ENCODE measurements at regions of chr2 and their contacts with region 1.

Region 1: GRCh38 chr2:230614913-230615332 is 97.7 kb upstream of the CAB39 start:
- DNase-seq: no peak
- H3K4me3 Mint-ChIP-seq: peak overlapping the region; percentile 5
- H3K27ac Mint-ChIP-seq: peak overlapping the region; percentile 57
- H3K4me1 Mint-ChIP-seq: peaks cover 40% of the 10 kb centered on the region
- H3K27me3 Mint-ChIP-seq: no peaks in the 10 kb centered on the region

Region 2: DNA sequence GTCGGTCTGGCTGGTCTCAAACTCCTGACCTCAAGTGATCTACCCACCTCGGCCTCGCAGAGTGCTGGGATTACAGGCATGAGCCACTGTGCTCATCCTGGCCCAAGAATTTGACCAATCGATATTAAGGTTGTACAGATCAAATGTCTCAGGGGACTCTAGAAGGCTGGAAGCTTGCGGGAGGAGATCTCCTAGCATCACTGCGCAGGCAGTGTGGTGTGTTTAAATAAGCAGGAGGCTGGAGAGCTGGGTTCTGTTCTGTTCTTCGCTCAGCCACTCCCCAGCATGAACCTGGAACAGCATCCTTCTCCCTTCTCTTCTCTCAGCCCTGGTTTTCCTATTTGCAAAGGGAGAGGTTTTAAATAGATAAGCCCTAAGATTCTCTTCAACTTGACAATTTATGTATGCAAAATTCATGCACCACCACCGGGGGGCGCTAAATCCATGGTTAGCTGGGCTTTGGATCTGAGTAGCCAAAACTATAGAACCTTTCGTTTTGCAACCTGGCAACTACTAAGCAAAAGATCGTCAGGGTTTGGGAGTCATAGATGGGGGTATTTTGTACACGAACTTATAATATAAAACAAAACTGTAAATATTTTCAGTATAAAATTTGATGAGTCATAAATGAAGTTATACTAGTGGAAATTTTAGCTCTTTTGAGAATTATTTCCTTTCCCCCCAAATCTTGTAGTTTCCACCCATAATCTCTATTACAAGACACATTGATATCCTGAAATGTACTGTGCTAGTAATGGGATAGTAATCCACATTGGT is 606.8 kb before region 1 on chr2:
- intact Hi-C with region 1: loop called (anchors 1 kb)
- DNase-seq: peak; percentile 68
- H3K4me3 Mint-ChIP-seq: no peak overlapping the region
- H3K27ac Mint-ChIP-seq: no peak overlapping the region
- H3K4me1 Mint-ChIP-seq: peaks cover 10% of the 10 kb centered on the region
- H3K27me3 Mint-ChIP-seq: no peaks in the 10 kb centered on the region

Region 3: DNA sequence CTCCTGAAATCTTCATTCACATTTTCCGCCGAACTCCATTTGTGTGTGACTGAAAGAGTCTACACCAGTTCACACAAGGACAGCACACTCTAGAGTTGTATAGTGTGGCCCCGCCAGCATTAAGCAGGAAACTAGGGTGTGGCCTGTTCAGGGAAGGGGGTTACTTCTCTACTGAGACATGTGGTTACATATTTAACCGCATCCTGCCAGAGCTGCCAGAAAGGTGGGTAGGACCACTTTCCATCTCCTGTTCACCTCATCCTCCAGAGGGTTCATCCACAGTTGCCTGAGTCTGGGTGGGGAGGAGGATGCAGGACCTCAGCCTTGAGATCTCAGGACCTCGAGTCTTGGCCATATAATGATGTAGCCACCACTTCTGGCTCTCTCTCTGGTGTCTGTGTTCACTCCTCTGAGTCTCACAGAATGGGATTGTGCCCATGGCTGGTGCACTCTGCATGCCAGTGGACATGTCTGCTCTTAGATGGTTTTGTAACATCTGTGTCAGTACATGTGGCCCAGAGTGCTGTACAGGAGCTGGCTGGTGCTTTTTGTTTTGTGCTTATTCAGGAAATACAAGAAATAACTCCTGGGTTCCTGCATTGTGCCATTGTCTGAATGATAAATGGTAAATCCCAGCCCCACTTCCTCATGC is 295.6 kb before region 1 on chr2:
- intact Hi-C with region 1: loop called (anchors 2 kb)
- DNase-seq: peak; percentile 79
- H3K4me3 Mint-ChIP-seq: peak overlapping the region; percentile 61
- H3K27ac Mint-ChIP-seq: peak overlapping the region; percentile 94
- H3K4me1 Mint-ChIP-seq: peaks cover 60% of the 10 kb centered on the region
- H3K27me3 Mint-ChIP-seq: no peaks in the 10 kb centered on the region

Region 4: GRCh38 chr2:230447455-230448451 is 167.2 kb before region 1 on chr2:
- intact Hi-C with region 1: loop called (anchors 5 kb)
- DNase-seq: no peak
- H3K4me3 Mint-ChIP-seq: peak overlapping the region; percentile 20
- H3K27ac Mint-ChIP-seq: peak overlapping the region; percentile 80
- H3K4me1 Mint-ChIP-seq: peaks cover 58% of the 10 kb centered on the region
- H3K27me3 Mint-ChIP-seq: no peaks in the 10 kb centered on the region

Region 5: DNA sequence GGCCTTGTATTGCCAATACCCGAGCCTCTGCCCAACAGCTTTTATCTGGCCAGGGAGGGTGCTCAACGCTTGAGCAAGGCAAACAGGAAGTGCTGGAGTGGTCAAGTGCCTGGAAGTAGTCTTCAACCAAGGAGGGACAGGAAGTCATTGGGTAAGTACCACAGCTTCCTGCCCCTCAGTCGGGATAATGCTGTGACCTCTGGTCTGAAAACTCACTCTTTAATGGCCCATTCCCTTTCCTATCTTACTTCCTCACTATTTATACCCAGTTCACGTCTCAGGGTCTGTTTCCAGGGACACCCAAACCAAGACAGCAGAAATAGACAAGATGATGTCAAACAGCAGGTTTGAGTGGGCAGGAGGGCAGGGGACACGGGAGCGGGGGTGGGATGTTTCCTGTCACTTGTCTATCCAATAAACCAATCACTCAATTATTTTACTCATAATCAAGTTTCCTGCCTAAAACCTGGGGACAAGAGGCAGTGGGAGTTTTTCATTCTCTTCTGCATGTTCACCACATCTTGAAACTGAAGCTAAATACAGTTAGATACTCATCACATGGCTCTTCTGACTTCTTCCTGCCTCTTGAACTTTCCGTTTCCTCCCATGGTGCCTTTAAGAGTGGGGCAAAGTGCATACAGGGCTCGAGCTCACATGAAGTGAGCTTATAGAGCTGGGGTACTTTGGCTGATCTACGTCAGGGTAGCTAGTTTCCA is 28.8 kb after region 1 on chr2:
- intact Hi-C with region 1: loop called (anchors 1 kb)
- DNase-seq: peak; percentile 51
- H3K4me3 Mint-ChIP-seq: peak overlapping the region; percentile 40
- H3K27ac Mint-ChIP-seq: peak overlapping the region; percentile 98
- H3K4me1 Mint-ChIP-seq: peaks cover 24% of the 10 kb centered on the region
- H3K27me3 Mint-ChIP-seq: no peaks in the 10 kb centered on the region

Region 6: DNA sequence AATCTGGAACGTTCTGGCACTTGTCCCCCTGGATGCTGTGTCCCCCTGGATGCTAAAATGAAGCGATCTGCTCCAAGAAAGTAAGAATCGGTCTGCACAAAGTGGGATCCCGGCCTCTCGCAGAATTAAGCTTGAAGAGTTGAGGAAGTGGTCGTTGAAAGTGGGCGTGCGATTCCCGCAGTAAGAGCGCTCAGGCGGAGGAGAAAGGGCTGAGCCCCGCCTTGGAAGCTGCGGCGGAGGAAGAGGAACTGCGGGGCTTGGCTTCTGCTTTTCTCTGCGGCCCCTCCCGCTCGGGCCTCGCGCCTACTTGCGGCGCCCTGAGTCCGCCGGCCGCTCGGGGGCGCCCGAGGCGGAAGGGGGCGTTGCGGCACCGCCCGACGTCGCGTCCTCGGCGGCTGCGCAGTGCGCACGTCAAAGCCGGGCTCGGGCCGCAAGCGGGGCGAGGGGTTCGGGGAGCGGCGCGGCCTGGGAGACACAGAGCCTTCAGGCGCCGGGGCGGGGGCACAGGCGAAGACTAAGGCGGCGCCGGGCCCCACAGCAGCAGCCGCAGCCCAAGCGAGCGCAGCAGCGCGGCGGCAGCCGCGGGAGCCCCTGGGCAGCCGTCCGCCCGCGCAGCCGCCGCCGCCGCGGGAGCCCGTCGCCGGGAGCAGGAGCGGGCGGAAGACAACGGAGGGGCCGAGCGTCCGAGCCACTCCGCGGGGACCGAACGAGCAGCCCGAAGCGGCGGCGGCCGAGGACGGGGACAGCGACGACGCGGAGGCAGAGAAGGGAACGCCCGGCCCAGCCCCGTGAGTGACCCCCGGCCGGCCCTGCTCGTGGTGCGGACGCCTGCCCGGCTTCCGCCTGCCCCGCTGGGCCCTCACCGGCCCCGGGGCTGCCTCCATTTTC is 97.8 kb after region 1 on chr2 and contains the start of gene CAB39:
- intact Hi-C with region 1: loop called (anchors 5 kb)
- DNase-seq: peak; percentile 87
- H3K4me3 Mint-ChIP-seq: peak within 1 kb of the TSS; percentile 99
- H3K27ac Mint-ChIP-seq: peak within 1 kb of the TSS; percentile 93
- H3K4me1 Mint-ChIP-seq: peaks cover 34% of the 10 kb centered on the region
- H3K27me3 Mint-ChIP-seq: no peaks in the 10 kb centered on the region
- total RNA-seq, gene CAB39: 173 and 176 TPM in 2 replicates

Measured in activated T-helper 2 cell treated with anti-CD3 and anti-CD28 coated beads, Interferon-gamma antibody, Interleukin-2, Interleukin-4, amounts not matched to agents 10 μg/mL and 5 μg/mL and 100 μg/mL, durations not matched to agents 14 hours and 24 hours and 36 hours (primary cell).